HCT116 (cell line): ENCODE measurements at regions of chr15 and their contacts with region 1.

Region 1: GRCh38 chr15:97909291-97909891 is 51.1 kb upstream of the ARRDC4 start:
- DNase-seq: peak; percentile 39
- ATAC-seq: peak; percentile 98
- H3K4me3 ChIP-seq: no peak overlapping the region
- H3K27ac ChIP-seq: no peak overlapping the region
- H3K4me1 ChIP-seq: peaks cover 0 to 1% of the 10 kb centered on the region in 2 experiments; a peak in 2 of 4 replicates
- H3K27me3 ChIP-seq: peaks cover 13% of the 10 kb centered on the region
- CTCF ChIP-seq: peak; percentile 66 to 94 (median 90)
- POLR2A ChIP-seq: no peak
- RAD21 ChIP-seq: peak; percentile 77

Region 2: GRCh38 chr15:97482521-97482920 is 426.9 kb before region 1 on chr15:
- CTCF ChIA-PET with region 1: no interaction called
- POLR2A ChIA-PET with region 1: no interaction called
- RAD21 ChIA-PET with region 1: no interaction called
- intact Hi-C with region 1: no loop called
- DNase-seq: no peak
- ATAC-seq: no peak
- H3K4me3 ChIP-seq: no peak overlapping the region
- H3K27ac ChIP-seq: no peak overlapping the region
- H3K4me1 ChIP-seq: no peaks in the 10 kb centered on the region
- H3K27me3 ChIP-seq: no peaks in the 10 kb centered on the region
- CTCF ChIP-seq: no peak
- POLR2A ChIP-seq: no peak
- RAD21 ChIP-seq: 0 out of 2 replicates have a peak, but pooled peaks have one; percentile 6

Region 3: GRCh38 chr15:97921296-97921865 is 12.0 kb after region 1 on chr15:
- CTCF ChIA-PET with region 1: no interaction called
- POLR2A ChIA-PET with region 1: no interaction called
- RAD21 ChIA-PET with region 1: no interaction called
- intact Hi-C with region 1: no loop called
- DNase-seq: no peak
- ATAC-seq: no peak
- H3K4me3 ChIP-seq: no peak overlapping the region
- H3K27ac ChIP-seq: no peak overlapping the region
- H3K4me1 ChIP-seq: no peaks in the 10 kb centered on the region
- H3K27me3 ChIP-seq: peaks cover 9% of the 10 kb centered on the region; the same call in 1 of the 2 replicates
- CTCF ChIP-seq: no peak
- POLR2A ChIP-seq: no peak
- RAD21 ChIP-seq: no peak

Region 4: DNA sequence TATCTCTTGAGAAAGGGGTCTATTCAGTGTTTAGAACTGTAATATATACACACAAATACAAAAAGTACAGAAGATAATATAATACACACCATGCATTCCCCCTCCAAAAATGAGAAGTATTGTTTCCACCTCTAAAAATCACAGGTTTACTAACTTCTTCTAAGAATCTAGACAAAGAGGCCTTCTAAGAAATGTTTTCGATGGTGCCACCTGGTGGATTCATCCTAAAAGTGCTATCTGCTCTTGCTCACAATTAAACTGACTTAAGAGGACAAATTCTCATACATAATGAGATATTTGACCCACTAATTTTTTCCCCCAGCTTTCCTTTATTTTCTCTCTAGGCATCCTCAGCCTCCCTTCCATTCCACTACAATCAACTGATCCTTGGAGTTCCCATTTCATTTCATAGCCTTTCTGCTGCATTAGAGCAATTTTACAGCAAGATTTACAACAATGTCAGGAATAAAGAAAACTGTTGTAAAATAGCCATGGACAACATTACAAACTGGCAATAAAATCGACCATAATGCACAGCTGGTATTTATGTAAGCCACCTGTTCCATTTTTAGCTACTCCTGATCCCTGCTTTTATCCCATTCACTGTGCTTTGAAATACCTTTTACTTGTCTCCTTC is 175.7 kb after region 1 on chr15:
- CTCF ChIA-PET with region 1: interaction called, 4 read pairs
- POLR2A ChIA-PET with region 1: no interaction called
- RAD21 ChIA-PET with region 1: no interaction called
- intact Hi-C with region 1: loop called (anchors 1 kb)
- DNase-seq: peak; percentile 56
- ATAC-seq: no peak
- H3K4me3 ChIP-seq: no peak overlapping the region
- H3K27ac ChIP-seq: no peak overlapping the region
- H3K4me1 ChIP-seq: no peaks in the 10 kb centered on the region
- H3K27me3 ChIP-seq: no peaks in the 10 kb centered on the region
- CTCF ChIP-seq: peak; percentile 54 to 67 (median 58); a peak in 5 of 6 replicates
- POLR2A ChIP-seq: no peak
- RAD21 ChIP-seq: peak; percentile 64

Region 5: GRCh38 chr15:98292442-98293240 is 383.2 kb after region 1 on chr15:
- CTCF ChIA-PET with region 1: no interaction called
- POLR2A ChIA-PET with region 1: no interaction called
- RAD21 ChIA-PET with region 1: no interaction called
- intact Hi-C with region 1: loop called (anchors 1 kb)
- DNase-seq: peak; percentile 21
- ATAC-seq: peak; percentile 97
- H3K4me3 ChIP-seq: no peak overlapping the region
- H3K27ac ChIP-seq: no peak overlapping the region
- H3K4me1 ChIP-seq: no peaks in the 10 kb centered on the region
- H3K27me3 ChIP-seq: peaks cover 15% of the 10 kb centered on the region; the same call in 1 of the 2 replicates
- CTCF ChIP-seq: peak; percentile 60 to 89 (median 84)
- POLR2A ChIP-seq: no peak
- RAD21 ChIP-seq: peak; percentile 43